ENCODE measurements at regions of chr1 and their contacts with region 1.

Region 1: GRCh38 chr1:26853156-26853555 is 9.8 kb upstream of the SFN start:
- DNase-seq: peak; percentile 99
- ATAC-seq: peak; percentile 87
- H3K4me3 ChIP-seq: no peak overlapping the region
- H3K27ac ChIP-seq: peak overlapping the region; percentile 89
- H3K4me1 ChIP-seq: peaks cover 57% of the 10 kb centered on the region
- H3K27me3 ChIP-seq: no peaks in the 10 kb centered on the region
- CTCF ChIP-seq: peak; percentile 91

Region 2: DNA sequence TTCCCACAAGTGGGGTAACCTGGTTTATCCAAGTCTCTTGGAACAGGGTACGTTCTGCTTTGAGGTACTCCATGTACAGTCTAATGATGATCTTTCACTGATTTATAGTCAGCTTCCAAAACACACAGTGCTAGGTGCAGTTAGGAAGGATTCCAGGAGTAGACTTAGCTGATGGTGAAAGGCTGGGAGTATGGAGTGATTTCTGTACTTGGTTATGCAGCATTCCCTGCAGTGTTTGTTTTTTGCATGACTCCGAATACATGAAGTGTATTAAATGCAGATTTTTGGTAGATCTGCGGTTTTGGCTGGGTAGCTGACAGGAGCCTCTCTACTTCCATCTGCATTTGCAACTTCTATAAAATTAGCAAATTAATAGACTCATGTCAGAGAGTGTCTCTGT is 377.2 kb before region 1 on chr1:
- CTCF ChIA-PET with region 1: no interaction called
- POLR2A ChIA-PET with region 1: no interaction called
- intact Hi-C with region 1: no loop called
- DNase-seq: no peak
- ATAC-seq: no peak
- H3K4me3 ChIP-seq: no peak overlapping the region
- H3K27ac ChIP-seq: no peak overlapping the region
- H3K4me1 ChIP-seq: peaks cover 22% of the 10 kb centered on the region
- H3K27me3 ChIP-seq: no peaks in the 10 kb centered on the region
- CTCF ChIP-seq: no peak

Region 3: DNA sequence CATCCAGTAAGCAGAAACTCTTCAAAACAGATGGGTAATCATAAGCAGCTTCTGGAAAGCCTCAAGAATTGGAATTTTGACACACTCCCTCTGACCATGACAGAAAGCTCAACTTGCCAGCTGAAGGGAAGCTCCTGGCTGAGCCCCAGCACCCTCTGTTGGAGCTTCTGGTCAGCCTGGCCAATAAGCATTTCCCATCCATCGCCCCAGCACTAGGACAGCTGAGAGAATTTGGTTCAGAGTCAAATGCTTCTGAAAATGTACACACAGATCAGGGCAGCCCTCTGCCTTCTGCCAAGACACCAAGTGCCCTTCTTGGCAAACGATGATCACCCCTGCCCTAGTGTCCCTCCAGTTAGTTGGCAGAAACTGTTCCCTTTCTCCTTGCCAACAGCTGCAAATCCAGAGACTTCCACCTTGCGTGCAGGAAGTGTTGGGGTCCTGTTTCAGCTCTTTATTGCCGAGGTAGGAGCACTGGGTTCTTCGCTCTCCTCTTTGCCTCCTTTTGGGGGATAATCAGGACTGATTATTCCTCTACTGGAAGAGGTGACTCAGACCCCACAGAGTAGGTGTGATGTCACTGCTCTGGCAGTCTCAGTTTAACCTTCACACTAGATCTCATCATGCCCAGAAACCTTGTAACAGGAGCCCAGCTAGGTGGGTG is 53.5 kb before region 1 on chr1:
- CTCF ChIA-PET with region 1: interaction called, 4 read pairs
- POLR2A ChIA-PET with region 1: interaction called, 17 read pairs
- intact Hi-C with region 1: no loop called
- DNase-seq: peak; percentile 81
- ATAC-seq: peak; percentile 82
- H3K4me3 ChIP-seq: peak overlapping the region; percentile 43; the same call in 1 of the 2 replicates
- H3K27ac ChIP-seq: peak overlapping the region; percentile 82
- H3K4me1 ChIP-seq: peaks cover 36% of the 10 kb centered on the region
- H3K27me3 ChIP-seq: no peaks in the 10 kb centered on the region
- CTCF ChIP-seq: no peak

Region 4: DNA sequence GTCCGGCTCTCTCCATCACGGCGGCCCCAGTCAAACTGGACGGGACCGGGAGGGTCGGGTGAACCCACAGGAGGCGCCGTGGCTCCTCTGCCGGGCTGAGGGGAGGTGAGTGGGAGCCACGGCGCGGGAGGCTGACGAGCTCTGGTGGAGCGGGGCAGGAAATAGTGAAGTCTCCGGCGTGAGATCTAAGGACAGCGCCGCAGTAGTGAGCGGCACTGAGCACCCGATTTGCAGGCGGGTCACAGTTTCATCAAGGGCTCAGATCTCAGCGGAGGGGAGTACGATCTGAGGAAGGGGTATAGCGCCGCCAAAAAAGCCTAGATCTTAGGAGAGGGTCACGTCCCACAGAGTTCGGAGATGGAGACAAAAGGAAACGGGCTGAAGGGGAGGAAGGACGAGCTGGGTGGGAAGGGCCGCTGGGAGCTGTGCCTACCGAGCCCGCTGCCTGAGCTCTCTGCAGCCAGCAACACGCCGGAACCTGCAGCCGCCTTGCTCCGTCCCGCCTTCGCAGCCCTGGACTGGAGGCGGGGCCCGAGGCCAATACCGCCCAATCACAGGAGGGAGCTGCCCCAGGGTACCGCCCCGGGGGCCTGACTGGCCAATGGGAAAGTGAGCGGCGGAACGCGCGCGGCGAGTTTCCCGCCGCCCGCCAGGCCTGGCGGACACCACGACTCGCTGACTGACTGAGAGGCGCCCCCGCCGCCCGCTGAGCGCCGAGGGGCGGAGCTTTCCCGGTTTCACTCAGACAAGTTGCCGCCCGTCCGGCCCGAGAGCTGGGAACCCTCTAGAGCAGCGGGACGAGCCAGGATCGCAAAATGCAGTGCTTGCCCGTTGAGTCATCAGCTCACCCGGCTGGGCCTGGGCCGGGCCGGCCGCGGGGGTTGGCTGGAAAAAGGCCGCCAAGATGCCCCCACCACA is 11.7 kb after region 1 on chr1:
- CTCF ChIA-PET with region 1: interaction called, 8 read pairs
- POLR2A ChIA-PET with region 1: interaction called, 4 read pairs
- intact Hi-C with region 1: loop called (anchors 1 kb)
- DNase-seq: peak; percentile 99
- ATAC-seq: peak; percentile 64
- H3K4me3 ChIP-seq: peak overlapping the region; percentile 90
- H3K27ac ChIP-seq: peak overlapping the region; percentile 95
- H3K4me1 ChIP-seq: peaks cover 43% of the 10 kb centered on the region
- H3K27me3 ChIP-seq: no peaks in the 10 kb centered on the region
- CTCF ChIP-seq: 0 out of 2 replicates have a peak, but pooled peaks have one; percentile 20

Measured in PC-3 (cell line).